ENCODE measurements at regions of chr17 and their contacts with region 1.

Region 1: DNA sequence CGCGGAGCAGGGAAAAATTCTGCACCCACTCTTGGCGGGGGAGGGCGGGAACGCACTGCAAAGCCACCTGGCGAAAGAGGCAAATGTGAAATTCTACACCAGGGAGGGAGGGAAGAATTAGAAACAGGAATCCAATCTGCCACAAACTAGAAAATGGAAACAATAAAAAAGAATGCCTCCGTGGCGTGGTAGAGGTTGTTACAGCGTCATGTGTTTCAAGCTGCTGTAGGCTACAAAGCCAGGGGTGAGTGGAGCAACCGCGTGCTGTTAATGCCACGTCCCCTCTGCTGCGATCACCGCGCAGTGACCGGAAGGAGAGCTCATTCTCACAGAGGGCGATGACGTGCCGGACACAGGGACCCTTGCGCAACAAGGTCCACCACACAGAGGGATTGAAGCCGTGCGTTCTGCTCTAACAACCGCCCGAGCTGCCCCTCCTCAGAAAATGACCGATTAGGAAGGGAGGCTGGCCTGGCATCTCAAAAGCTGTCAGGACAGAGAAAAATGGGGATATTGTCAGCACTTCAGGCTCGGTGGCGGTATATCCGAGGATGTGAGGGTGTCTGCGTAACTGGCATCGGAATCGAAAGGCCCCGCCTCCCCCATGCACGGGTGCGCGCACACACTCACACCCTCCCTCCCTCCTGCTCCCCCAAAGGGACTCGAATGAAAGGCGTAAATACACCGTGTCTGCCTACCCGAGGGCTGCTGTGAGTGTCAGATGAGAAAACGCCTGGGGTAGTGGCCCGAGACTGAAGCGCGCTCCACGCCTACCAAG is 70.8 kb upstream of the TNRC6C start:
- DNase-seq: peak; percentile 81 to 92 (median 85)
- H3K4me3 ChIP-seq: peak overlapping the region; percentile 67 to 86
- H3K4me3 Mint-ChIP-seq: peak overlapping the region; percentile 91 to 96 (median 93)
- H3K27ac ChIP-seq: peak overlapping the region; percentile 95
- H3K27ac Mint-ChIP-seq: peak overlapping the region; percentile 93 to 100 (median 99)
- H3K4me1 ChIP-seq: peaks cover 47% of the 10 kb centered on the region
- H3K4me1 Mint-ChIP-seq: peaks cover 45 to 55% (median 52%) of the 10 kb centered on the region in 4 donors
- H3K27me3 ChIP-seq: no peaks in the 10 kb centered on the region
- H3K27me3 Mint-ChIP-seq: no peaks in the 10 kb centered on the region

Region 2: GRCh38 chr17:77783991-77784820 is 103.4 kb before region 1 on chr17:
- CTCF ChIA-PET with region 1: interaction called, 3 read pairs
- POLR2A ChIA-PET with region 1: interaction called, 40 read pairs
- intact Hi-C with region 1: loop called (anchors 2 kb)
- DNase-seq: peak; percentile 76 to 90 (median 81)
- H3K4me3 ChIP-seq: no peak overlapping the region
- H3K4me3 Mint-ChIP-seq: peak overlapping the region; percentile 52 to 84 (median 67)
- H3K27ac ChIP-seq: peak overlapping the region; percentile 76
- H3K27ac Mint-ChIP-seq: peak overlapping the region; percentile 94 to 99 (median 97)
- H3K4me1 ChIP-seq: peaks cover 26% of the 10 kb centered on the region
- H3K4me1 Mint-ChIP-seq: peaks cover 13 to 26% (median 18%) of the 10 kb centered on the region in 4 donors
- H3K27me3 ChIP-seq: no peaks in the 10 kb centered on the region
- H3K27me3 Mint-ChIP-seq: no peaks in the 10 kb centered on the region

Region 3: DNA sequence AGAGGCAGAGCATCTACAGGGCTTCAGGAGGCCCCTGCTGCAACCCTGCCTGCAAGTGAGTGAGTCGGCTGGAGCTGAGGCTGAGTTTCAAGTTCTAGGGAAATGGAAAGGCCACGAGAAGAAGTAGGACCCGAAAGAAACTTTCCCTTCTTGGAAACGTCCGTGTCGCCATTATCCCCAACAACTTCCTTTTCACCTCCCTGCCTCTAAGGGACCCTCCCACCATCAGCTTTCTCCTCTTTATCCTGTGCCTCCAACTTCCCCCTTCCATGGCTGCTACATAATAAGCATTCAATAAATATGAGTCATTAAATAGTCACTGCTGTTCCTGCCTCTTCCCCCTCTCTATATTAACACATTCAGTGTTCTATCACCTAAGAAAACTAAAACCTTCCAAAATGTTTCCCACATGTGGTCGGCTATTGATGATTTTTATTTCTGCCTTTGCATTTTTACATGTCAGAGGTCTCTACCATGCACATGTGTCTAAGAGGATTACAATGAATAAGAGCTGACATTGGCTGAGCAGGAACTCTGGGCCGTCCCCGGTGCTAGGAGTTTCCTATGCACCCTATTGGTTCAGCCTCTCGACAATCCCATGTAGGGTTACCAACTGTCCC is 45.0 kb before region 1 on chr17:
- CTCF ChIA-PET with region 1: interaction called, 3 read pairs
- POLR2A ChIA-PET with region 1: interaction called, 94 read pairs
- intact Hi-C with region 1: loop called (anchors 1 kb)
- DNase-seq: no peak
- H3K4me3 ChIP-seq: no peak overlapping the region
- H3K4me3 Mint-ChIP-seq: peak overlapping the region in 7 of 8 donors; percentile 4 to 85 (median 69)
- H3K27ac ChIP-seq: no peak overlapping the region
- H3K27ac Mint-ChIP-seq: peak overlapping the region; percentile 87 to 97 (median 93)
- H3K4me1 ChIP-seq: peaks cover 63% of the 10 kb centered on the region
- H3K4me1 Mint-ChIP-seq: peaks cover 34 to 74% (median 43%) of the 10 kb centered on the region in 4 donors
- H3K27me3 ChIP-seq: no peaks in the 10 kb centered on the region
- H3K27me3 Mint-ChIP-seq: no peaks in the 10 kb centered on the region

Region 4: GRCh38 chr17:77856551-77857305 is 30.9 kb before region 1 on chr17:
- CTCF ChIA-PET with region 1: no interaction called
- POLR2A ChIA-PET with region 1: no interaction called
- intact Hi-C with region 1: no loop called
- DNase-seq: no peak
- H3K4me3 ChIP-seq: no peak overlapping the region
- H3K4me3 Mint-ChIP-seq: no peak overlapping the region
- H3K27ac ChIP-seq: no peak overlapping the region
- H3K27ac Mint-ChIP-seq: no peak overlapping the region
- H3K4me1 ChIP-seq: peaks cover 10% of the 10 kb centered on the region
- H3K4me1 Mint-ChIP-seq: peaks cover 6 to 12% (median 9%) of the 10 kb centered on the region in 4 donors
- H3K27me3 ChIP-seq: no peaks in the 10 kb centered on the region
- H3K27me3 Mint-ChIP-seq: no peaks in the 10 kb centered on the region

Region 5: DNA sequence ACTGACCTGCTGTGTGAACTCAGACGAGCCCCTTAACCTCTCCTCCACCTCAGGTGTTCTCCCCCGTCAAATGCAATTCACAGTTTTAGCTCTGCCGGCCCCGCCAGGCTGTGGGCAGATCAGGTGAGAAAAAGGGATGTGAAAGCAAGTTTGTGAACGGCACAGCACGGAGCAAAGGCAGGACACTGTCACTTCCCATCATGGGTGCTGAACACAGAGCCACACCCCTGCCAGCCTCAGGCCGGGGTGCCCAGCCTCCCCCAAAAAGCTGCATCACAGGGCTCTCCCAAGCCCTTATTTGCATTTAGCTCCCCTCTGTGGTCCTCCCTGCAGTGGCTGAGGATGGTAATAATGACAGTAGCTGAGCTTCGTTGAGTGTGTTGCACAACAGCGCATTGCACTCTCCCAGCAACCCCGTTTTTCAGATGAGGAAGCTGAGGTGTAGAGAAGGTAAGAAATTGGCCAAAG is 18.0 kb before region 1 on chr17:
- CTCF ChIA-PET with region 1: no interaction called
- POLR2A ChIA-PET with region 1: interaction called, 23 read pairs
- intact Hi-C with region 1: loop called (anchors 1 kb)
- DNase-seq: no peak
- H3K4me3 ChIP-seq: no peak overlapping the region
- H3K4me3 Mint-ChIP-seq: peak overlapping the region in 7 of 8 donors; percentile 1 to 78 (median 72)
- H3K27ac ChIP-seq: no peak overlapping the region
- H3K27ac Mint-ChIP-seq: peak overlapping the region in 6 of 7 donors; percentile 24 to 87 (median 46)
- H3K4me1 ChIP-seq: peaks cover 45% of the 10 kb centered on the region
- H3K4me1 Mint-ChIP-seq: peaks cover 35 to 70% (median 45%) of the 10 kb centered on the region in 4 donors
- H3K27me3 ChIP-seq: no peaks in the 10 kb centered on the region
- H3K27me3 Mint-ChIP-seq: no peaks in the 10 kb centered on the region

Region 6: GRCh38 chr17:77875881-77876509 is 11.7 kb before region 1 on chr17:
- CTCF ChIA-PET with region 1: interaction called, 3 read pairs
- POLR2A ChIA-PET with region 1: interaction called, 24 read pairs
- intact Hi-C with region 1: loop called (anchors 1 kb)
- DNase-seq: no peak
- H3K4me3 ChIP-seq: no peak overlapping the region
- H3K4me3 Mint-ChIP-seq: peak overlapping the region in 2 of 8 donors; percentile 30 to 67
- H3K27ac ChIP-seq: no peak overlapping the region
- H3K27ac Mint-ChIP-seq: peak overlapping the region in 4 of 7 donors; percentile 53 to 86 (median 74)
- H3K4me1 ChIP-seq: peaks cover 90% of the 10 kb centered on the region
- H3K4me1 Mint-ChIP-seq: peaks cover 53 to 99% (median 75%) of the 10 kb centered on the region in 4 donors
- H3K27me3 ChIP-seq: no peaks in the 10 kb centered on the region
- H3K27me3 Mint-ChIP-seq: no peaks in the 10 kb centered on the region

Region 7: DNA sequence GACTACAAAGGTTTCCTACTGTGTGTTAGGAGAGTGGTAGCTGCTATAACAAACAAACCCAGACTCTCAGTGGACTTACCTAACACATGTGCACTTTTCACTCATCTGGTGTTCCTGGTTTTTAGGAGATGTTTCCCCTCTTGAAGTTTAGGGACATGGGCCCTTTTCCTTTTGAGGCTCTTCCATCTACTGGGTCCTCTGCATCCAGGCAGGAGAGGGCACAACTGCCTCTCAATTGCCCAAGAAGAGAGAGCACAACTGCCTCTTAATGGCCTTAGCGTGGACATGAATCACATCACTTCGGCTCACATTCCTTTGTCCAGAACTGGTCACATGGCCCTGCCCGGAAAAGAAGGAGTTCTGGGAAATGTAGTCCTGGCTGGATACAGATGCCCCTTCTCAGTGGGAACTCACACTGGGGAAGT is 61.0 kb after region 1 on chr17:
- CTCF ChIA-PET with region 1: no interaction called
- POLR2A ChIA-PET with region 1: no interaction called
- intact Hi-C with region 1: no loop called
- DNase-seq: no peak
- H3K4me3 ChIP-seq: no peak overlapping the region
- H3K4me3 Mint-ChIP-seq: no peak overlapping the region
- H3K27ac ChIP-seq: no peak overlapping the region
- H3K27ac Mint-ChIP-seq: no peak overlapping the region
- H3K4me1 ChIP-seq: no peaks in the 10 kb centered on the region
- H3K4me1 Mint-ChIP-seq: peaks cover 0 to 6% (median 3%) of the 10 kb centered on the region in 4 donors
- H3K27me3 ChIP-seq: no peaks in the 10 kb centered on the region
- H3K27me3 Mint-ChIP-seq: peaks cover 3 to 9% of the 10 kb centered on the region in 2 donors

Measured in CD4-positive, alpha-beta memory T cell (primary cell).